ENCODE measurements at regions of chr10 and their contacts with region 1.

Region 1: DNA sequence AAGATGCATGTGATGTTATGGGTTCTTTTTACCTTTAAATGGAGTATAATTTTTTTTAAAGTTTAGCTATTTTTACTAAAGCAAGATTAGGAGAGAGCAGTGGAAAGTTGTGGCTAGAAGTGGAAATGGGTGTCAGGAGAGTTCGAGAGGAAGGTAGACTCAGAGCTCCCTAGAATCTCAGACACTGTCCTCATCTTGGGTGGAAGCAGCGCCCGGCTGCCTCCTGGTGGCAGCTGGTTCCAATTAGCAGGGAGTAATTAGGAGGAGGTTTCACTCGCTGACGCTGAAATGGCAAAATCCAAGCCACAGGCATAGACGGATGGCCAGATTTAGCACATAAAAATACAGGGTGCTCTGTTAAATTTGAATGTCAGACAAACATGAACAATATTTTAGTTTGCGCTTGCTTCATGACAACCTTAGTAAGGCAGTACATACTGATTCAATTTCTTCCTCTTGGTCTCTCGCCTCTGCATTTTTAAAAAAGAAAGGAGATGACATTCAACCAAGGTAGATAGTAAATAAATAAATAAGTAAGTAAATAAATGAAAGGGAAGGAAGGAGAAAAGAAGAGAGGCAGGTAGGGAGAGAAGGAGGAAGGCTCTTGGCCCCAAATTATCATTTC is 58.5 kb downstream of the LGI1 start:
- DNase-seq: peak; percentile 44
- H3K4me3 ChIP-seq: no peak overlapping the region
- H3K27ac ChIP-seq: no peak overlapping the region
- H3K4me1 ChIP-seq: no peaks in the 10 kb centered on the region
- H3K27me3 ChIP-seq: peaks cover 22 to 24% of the 10 kb centered on the region in 2 experiments
- CTCF ChIP-seq: peak; percentile 51 to 70
- POLR2A ChIP-seq: no peak

Region 2: DNA sequence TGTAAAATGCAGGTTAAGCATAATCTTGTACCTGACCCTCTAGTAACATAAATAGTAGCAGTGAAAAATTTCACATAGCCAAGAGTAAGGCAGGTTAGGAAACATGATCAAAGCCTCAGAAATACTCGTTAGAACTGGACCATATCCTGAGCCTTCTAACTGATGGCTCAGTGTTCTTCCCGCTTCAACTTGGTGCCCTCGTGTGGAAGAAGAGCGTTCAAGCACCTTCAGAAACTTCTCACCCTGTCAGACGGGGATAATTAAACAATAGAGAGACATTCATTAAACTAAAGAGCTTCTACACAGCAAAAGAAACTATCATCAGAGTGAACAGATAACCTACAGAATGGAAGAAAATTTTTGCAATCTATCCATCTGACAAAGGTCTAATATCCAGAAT is 458.6 kb before region 1 on chr10:
- CTCF ChIA-PET with region 1: no interaction called
- POLR2A ChIA-PET with region 1: no interaction called
- dilution Hi-C with region 1: no loop called
- intact Hi-C with region 1: no loop called
- DNase-seq: peak; percentile 51
- H3K4me3 ChIP-seq: no peak overlapping the region
- H3K27ac ChIP-seq: no peak overlapping the region
- H3K4me1 ChIP-seq: no peaks in the 10 kb centered on the region
- H3K27me3 ChIP-seq: no peaks in the 10 kb centered on the region
- CTCF ChIP-seq: peak; percentile 36 to 43
- POLR2A ChIP-seq: no peak

Region 3: DNA sequence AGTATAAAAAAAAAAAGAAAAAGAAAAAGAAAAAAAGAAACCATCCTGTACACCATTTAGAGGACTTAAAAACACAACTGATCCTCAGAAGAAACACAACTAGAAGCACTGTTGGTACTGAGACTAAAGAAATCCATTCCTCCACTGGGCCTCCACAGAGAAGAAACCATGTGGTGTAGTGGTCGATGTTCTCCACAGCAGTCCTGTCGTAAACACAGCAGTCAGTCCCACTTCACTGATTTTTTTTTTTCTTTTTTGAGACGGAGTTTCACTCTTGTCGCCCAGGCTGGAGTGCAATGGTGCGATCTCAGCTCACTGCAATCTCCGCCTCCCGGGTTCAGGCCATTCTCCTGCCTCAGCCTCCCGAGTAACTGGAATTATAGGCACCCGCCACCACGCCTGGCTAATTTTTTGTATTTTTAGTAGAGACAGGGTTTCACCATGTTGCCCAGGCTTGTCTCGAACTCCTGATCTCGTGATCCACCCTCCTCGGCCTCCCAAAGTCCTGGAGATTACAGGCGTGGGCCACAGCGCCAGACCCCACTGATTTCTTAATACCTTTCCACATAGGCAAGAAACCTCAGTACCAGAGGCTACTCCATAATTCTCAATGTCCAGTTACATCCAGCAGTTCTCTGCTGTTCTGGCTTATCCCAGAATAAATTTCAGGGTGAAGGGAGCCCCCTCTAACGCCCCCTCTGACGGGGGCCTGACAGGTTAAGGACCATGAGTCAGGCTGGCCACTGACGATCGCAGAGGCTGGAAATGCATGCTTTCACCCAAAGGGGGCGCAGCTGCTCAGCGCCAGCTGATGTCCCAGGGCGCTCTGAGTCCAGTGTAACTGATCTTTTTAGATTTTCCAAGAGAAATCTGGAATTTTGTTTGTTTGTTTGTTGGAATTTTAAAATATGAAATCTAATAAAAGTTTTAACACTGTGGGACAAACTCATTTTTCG is 274.6 kb before region 1 on chr10:
- CTCF ChIA-PET with region 1: interaction called, 17 read pairs
- POLR2A ChIA-PET with region 1: no interaction called
- dilution Hi-C with region 1: no loop called
- intact Hi-C with region 1: no loop called
- DNase-seq: peak; percentile 69
- H3K4me3 ChIP-seq: peak overlapping the region in 1 of 3 experiments; percentile 7
- H3K27ac ChIP-seq: no peak overlapping the region
- H3K4me1 ChIP-seq: peaks cover 5% of the 10 kb centered on the region
- H3K27me3 ChIP-seq: peaks cover 0 to 2% of the 10 kb centered on the region in 2 experiments
- CTCF ChIP-seq: peak; percentile 89 to 97
- POLR2A ChIP-seq: no peak

Region 4: GRCh38 chr10:93702211-93703001 is 113.8 kb before region 1 on chr10 and contains the start of gene FRA10AC1:
- CTCF ChIA-PET with region 1: interaction called, 9 read pairs
- POLR2A ChIA-PET with region 1: interaction called, 3 read pairs
- dilution Hi-C with region 1: no loop called
- intact Hi-C with region 1: loop called (anchors 1 kb)
- DNase-seq: peak; percentile 91
- H3K4me3 ChIP-seq: peak within 1 kb of the TSS; percentile 68 to 94 (median 88)
- H3K27ac ChIP-seq: peak within 1 kb of the TSS; percentile 74
- H3K4me1 ChIP-seq: peaks cover 9% of the 10 kb centered on the region
- H3K27me3 ChIP-seq: peaks cover 0 to 4% of the 10 kb centered on the region in 2 experiments
- CTCF ChIP-seq: peak; percentile 12 to 21
- POLR2A ChIP-seq: no peak
- total RNA-seq, gene FRA10AC1: 17.2 and 24.4 TPM in 2 replicates

Region 5: GRCh38 chr10:93799155-93799708 is 17.0 kb before region 1 on chr10:
- CTCF ChIA-PET with region 1: no interaction called
- POLR2A ChIA-PET with region 1: no interaction called
- dilution Hi-C with region 1: no loop called
- intact Hi-C with region 1: no loop called
- DNase-seq: no peak
- H3K4me3 ChIP-seq: no peak overlapping the region
- H3K27ac ChIP-seq: no peak overlapping the region
- H3K4me1 ChIP-seq: no peaks in the 10 kb centered on the region
- H3K27me3 ChIP-seq: peaks cover 5 to 6% of the 10 kb centered on the region in 2 experiments
- CTCF ChIP-seq: no peak
- POLR2A ChIP-seq: no peak

Region 6: GRCh38 chr10:93859049-93859655 is 42.9 kb after region 1 on chr10:
- CTCF ChIA-PET with region 1: interaction called, 24 read pairs
- POLR2A ChIA-PET with region 1: no interaction called
- dilution Hi-C with region 1: no loop called
- intact Hi-C with region 1: loop called (anchors 1 kb)
- DNase-seq: peak; percentile 32
- H3K4me3 ChIP-seq: no peak overlapping the region
- H3K27ac ChIP-seq: no peak overlapping the region
- H3K4me1 ChIP-seq: peaks cover 7% of the 10 kb centered on the region
- H3K27me3 ChIP-seq: peaks cover 2 to 4% of the 10 kb centered on the region in 2 experiments
- CTCF ChIP-seq: peak in 1 of 2 donors; percentile 9
- POLR2A ChIP-seq: no peak

Region 7: GRCh38 chr10:93916257-93917063 is 100.2 kb after region 1 on chr10:
- CTCF ChIA-PET with region 1: interaction called, 16 read pairs
- POLR2A ChIA-PET with region 1: no interaction called
- dilution Hi-C with region 1: no loop called
- intact Hi-C with region 1: loop called (anchors 1 kb)
- DNase-seq: peak; percentile 31
- H3K4me3 ChIP-seq: no peak overlapping the region
- H3K27ac ChIP-seq: no peak overlapping the region
- H3K4me1 ChIP-seq: peaks cover 7% of the 10 kb centered on the region
- H3K27me3 ChIP-seq: no peaks in the 10 kb centered on the region
- CTCF ChIP-seq: peak in 1 of 2 donors; percentile 33
- POLR2A ChIP-seq: no peak

Region 8: DNA sequence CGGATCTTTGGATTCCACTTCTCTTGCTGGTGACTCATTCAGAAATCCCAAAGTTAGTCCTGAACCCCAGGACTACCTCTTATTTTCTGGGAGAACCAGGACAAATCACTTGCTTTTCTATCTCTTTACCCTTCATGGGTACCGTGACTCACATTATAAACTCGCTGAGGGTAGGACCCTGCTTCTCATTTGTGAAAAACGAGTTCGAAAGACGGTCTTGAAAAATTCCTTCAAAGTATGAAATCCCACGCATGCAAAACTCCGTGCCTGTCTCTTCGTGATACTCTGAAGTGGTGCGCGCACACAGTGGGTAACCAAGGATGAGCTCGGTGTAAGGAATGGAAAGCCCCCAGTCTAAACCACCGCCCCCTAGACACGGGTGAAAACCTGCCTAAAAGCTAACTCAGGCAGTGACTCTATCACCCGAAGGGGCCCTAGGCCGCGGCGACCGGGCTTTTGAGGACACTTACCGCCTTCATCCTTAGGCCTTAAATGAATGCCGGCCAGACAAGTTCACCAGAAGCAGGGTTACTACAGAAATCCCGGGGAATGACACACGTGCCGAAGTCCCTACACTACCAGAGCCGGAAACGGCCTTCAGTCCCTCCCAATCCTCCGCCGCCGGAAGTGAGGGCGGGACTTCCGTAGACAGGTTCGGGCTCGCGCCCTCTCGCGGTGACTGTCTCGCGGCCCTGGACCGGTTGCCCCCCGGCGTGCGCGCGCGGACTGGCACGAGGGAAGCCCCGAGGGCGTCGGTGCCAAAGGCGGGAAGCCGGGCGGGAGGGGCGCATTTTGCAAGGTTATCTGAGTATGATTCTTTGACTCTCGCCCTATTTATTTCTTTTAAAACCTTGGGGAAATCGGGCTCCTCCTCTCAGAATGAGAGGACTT is 546.4 kb after region 1 on chr10 and contains the start of gene NOC3L:
- CTCF ChIA-PET with region 1: interaction called, 4 read pairs
- POLR2A ChIA-PET with region 1: no interaction called
- dilution Hi-C with region 1: no loop called
- intact Hi-C with region 1: loop called (anchors 2 kb)
- DNase-seq: peak; percentile 92
- H3K4me3 ChIP-seq: peak within 1 kb of the TSS; percentile 46 to 87 (median 74)
- H3K27ac ChIP-seq: peak within 1 kb of the TSS; percentile 37
- H3K4me1 ChIP-seq: peaks cover 14% of the 10 kb centered on the region
- H3K27me3 ChIP-seq: peaks cover 3 to 7% of the 10 kb centered on the region in 2 experiments
- CTCF ChIP-seq: peak; percentile 75
- POLR2A ChIP-seq: peak; percentile 90
- total RNA-seq, gene NOC3L: 19.8 and 20.5 TPM in 2 replicates